CD4-positive, alpha-beta T cell (primary cell): ENCODE measurements at regions of chr21 and their contacts with region 1.

Region 1: GRCh38 chr21:35840197-35840799 is 220.0 kb downstream of the SETD4 start:
- DNase-seq: peak; percentile 9 to 77 (median 38)
- ATAC-seq: peak; percentile 51
- H3K4me3 ChIP-seq: no peak overlapping the region
- H3K4me3 Mint-ChIP-seq: no peak overlapping the region
- H3K27ac ChIP-seq: no peak overlapping the region
- H3K27ac Mint-ChIP-seq: no peak overlapping the region
- H3K4me1 ChIP-seq: no peaks in the 10 kb centered on the region
- H3K4me1 Mint-ChIP-seq: no peaks in the 10 kb centered on the region
- H3K27me3 ChIP-seq: no peaks in the 10 kb centered on the region
- H3K27me3 Mint-ChIP-seq: no peaks in the 10 kb centered on the region
- CTCF ChIP-seq: peak; percentile 78

Region 2: DNA sequence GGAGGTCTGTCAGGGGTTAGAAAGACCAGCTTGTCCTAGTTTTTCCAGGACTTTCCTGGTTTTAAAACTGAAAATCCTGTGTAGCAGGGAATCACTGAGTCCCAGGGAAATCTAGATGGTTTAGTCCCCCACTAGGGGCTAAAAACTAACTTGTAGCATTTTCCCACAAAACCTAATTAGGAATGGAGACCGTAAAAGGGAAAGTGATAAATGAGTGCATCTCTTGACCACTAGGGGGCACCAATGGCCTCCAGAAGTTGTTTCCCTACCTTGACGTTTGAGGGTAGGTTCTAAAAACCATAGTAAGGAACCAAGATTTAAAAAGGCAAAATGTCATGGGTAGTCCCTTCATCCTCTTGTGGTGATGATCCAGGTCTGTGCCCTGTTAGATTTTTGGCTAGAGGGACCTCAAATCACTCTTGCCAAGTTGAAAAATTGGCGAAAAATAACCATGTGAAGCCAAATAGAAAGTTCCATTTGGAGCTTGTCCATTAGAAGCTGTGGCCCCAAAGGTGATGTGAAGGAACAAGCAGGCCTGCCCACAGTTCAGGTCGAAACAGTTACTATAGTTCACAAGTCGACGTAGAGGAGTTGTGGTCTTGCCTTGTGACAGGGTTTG is 1147.0 kb before region 1 on chr21:
- CTCF ChIA-PET with region 1: interaction called, 20 read pairs
- POLR2A ChIA-PET with region 1: no interaction called
- intact Hi-C with region 1: loop called (anchors 1 kb)
- DNase-seq: peak in 12 of 14 experiments; percentile 8 to 79 (median 30)
- ATAC-seq: peak; percentile 32
- H3K4me3 ChIP-seq: no peak overlapping the region
- H3K4me3 Mint-ChIP-seq: no peak overlapping the region
- H3K27ac ChIP-seq: no peak overlapping the region
- H3K27ac Mint-ChIP-seq: no peak overlapping the region
- H3K4me1 ChIP-seq: no peaks in the 10 kb centered on the region
- H3K4me1 Mint-ChIP-seq: no peaks in the 10 kb centered on the region
- H3K27me3 ChIP-seq: peaks cover 4 to 13% of the 10 kb centered on the region in 2 experiments
- H3K27me3 Mint-ChIP-seq: peaks cover 16% of the 10 kb centered on the region
- CTCF ChIP-seq: peak; percentile 90

Region 3: GRCh38 chr21:34745557-34746255 is 1094.6 kb before region 1 on chr21:
- CTCF ChIA-PET with region 1: interaction called, 18 read pairs
- POLR2A ChIA-PET with region 1: interaction called, 9 read pairs
- intact Hi-C with region 1: loop called in 1 of 2 experiments (anchors 1 kb)
- DNase-seq: peak; percentile 12 to 77 (median 38)
- ATAC-seq: peak; percentile 73
- H3K4me3 ChIP-seq: no peak overlapping the region
- H3K4me3 Mint-ChIP-seq: peak overlapping the region; percentile 74
- H3K27ac ChIP-seq: no peak overlapping the region
- H3K27ac Mint-ChIP-seq: no peak overlapping the region
- H3K4me1 ChIP-seq: peaks cover 8% of the 10 kb centered on the region
- H3K4me1 Mint-ChIP-seq: peaks cover 5% of the 10 kb centered on the region
- H3K27me3 ChIP-seq: no peaks in the 10 kb centered on the region
- H3K27me3 Mint-ChIP-seq: no peaks in the 10 kb centered on the region
- CTCF ChIP-seq: peak; percentile 88

Region 4: GRCh38 chr21:35792569-35793305 is 47.6 kb before region 1 on chr21:
- CTCF ChIA-PET with region 1: no interaction called
- POLR2A ChIA-PET with region 1: no interaction called
- intact Hi-C with region 1: loop called in 1 of 2 experiments (anchors 5 kb)
- DNase-seq: no peak
- ATAC-seq: no peak
- H3K4me3 ChIP-seq: no peak overlapping the region
- H3K4me3 Mint-ChIP-seq: no peak overlapping the region
- H3K27ac ChIP-seq: no peak overlapping the region
- H3K27ac Mint-ChIP-seq: no peak overlapping the region
- H3K4me1 ChIP-seq: no peaks in the 10 kb centered on the region
- H3K4me1 Mint-ChIP-seq: no peaks in the 10 kb centered on the region
- H3K27me3 ChIP-seq: peaks cover 0 to 8% of the 10 kb centered on the region in 2 experiments
- H3K27me3 Mint-ChIP-seq: peaks cover 14% of the 10 kb centered on the region
- CTCF ChIP-seq: no peak

Region 5: DNA sequence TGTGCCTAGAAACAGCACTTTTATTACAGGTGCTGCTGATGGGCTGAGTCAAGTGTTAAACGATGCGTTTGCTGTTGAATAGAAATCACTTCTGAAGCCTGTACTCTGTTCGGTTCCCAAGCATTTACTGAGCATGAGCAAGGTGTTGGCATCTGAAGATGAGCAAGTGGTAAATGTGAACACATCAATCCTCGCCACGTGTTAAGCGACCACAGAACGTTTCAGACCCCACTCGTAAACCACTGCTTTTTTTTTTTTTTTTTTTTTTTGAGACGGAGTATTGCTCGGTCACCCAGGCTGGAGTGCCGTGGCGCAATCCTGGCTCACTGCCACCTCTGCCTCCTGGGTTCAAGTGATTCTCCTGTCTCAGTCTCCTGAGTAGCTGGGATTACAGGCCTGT is 21.2 kb before region 1 on chr21:
- CTCF ChIA-PET with region 1: no interaction called
- POLR2A ChIA-PET with region 1: no interaction called
- intact Hi-C with region 1: no loop called
- DNase-seq: no peak
- ATAC-seq: no peak
- H3K4me3 ChIP-seq: no peak overlapping the region
- H3K4me3 Mint-ChIP-seq: no peak overlapping the region
- H3K27ac ChIP-seq: no peak overlapping the region
- H3K27ac Mint-ChIP-seq: no peak overlapping the region
- H3K4me1 ChIP-seq: no peaks in the 10 kb centered on the region
- H3K4me1 Mint-ChIP-seq: no peaks in the 10 kb centered on the region
- H3K27me3 ChIP-seq: peaks cover 0 to 2% of the 10 kb centered on the region in 2 experiments
- H3K27me3 Mint-ChIP-seq: peaks cover 12% of the 10 kb centered on the region
- CTCF ChIP-seq: no peak

Region 6: DNA sequence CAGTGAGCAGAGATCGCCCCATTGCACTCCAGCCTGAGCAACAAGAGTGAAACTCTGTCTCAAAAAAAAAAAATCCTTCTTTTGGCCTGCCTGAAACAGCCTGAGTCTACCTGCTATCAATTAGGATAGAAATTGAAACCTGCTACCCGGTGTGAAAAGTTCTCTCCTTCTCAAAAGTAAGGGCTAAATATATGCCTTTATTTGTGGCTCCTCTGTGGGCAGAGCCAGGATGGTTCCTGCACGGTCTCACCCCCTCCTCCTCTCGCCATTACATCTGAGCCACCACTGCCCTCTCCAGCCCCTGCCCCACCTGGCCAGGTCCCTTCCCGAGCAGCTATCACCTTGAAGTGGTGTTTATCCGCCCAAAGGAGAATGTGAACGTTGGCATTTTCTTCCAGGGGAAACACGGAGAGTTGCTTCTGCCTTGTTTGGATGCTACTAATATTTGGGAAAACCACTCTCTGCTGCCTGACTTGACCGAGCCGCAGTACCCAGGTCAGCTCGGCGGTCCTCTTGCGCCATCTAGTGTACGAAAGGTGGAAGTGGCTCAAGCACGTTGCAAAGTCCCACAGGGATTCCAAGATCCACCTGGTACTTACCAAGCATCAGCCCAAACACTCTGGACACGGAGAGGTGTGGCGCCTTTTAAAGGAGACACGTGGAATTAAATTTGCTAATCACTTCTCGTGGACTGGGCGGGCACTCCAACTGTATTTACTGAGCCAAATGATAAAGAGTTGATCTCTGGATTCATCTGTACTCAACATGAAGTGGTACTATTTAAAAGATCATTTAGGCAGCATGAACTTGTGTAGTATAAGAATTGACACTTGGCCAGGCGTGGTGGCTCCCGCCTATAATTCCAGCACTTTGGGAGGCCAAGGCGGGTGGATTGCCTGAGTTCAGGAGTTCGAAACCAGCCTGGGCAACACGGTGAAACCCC is 188.1 kb after region 1 on chr21:
- CTCF ChIA-PET with region 1: interaction called, 5 read pairs
- POLR2A ChIA-PET with region 1: no interaction called
- intact Hi-C with region 1: loop called in 1 of 2 experiments (anchors 2 kb)
- DNase-seq: peak; percentile 25 to 85 (median 56)
- ATAC-seq: peak; percentile 80
- H3K4me3 ChIP-seq: no peak overlapping the region
- H3K4me3 Mint-ChIP-seq: no peak overlapping the region
- H3K27ac ChIP-seq: no peak overlapping the region
- H3K27ac Mint-ChIP-seq: no peak overlapping the region
- H3K4me1 ChIP-seq: peaks cover 5% of the 10 kb centered on the region
- H3K4me1 Mint-ChIP-seq: peaks cover 5% of the 10 kb centered on the region
- H3K27me3 ChIP-seq: no peaks in the 10 kb centered on the region
- H3K27me3 Mint-ChIP-seq: no peaks in the 10 kb centered on the region
- CTCF ChIP-seq: peak; percentile 95

Region 7: DNA sequence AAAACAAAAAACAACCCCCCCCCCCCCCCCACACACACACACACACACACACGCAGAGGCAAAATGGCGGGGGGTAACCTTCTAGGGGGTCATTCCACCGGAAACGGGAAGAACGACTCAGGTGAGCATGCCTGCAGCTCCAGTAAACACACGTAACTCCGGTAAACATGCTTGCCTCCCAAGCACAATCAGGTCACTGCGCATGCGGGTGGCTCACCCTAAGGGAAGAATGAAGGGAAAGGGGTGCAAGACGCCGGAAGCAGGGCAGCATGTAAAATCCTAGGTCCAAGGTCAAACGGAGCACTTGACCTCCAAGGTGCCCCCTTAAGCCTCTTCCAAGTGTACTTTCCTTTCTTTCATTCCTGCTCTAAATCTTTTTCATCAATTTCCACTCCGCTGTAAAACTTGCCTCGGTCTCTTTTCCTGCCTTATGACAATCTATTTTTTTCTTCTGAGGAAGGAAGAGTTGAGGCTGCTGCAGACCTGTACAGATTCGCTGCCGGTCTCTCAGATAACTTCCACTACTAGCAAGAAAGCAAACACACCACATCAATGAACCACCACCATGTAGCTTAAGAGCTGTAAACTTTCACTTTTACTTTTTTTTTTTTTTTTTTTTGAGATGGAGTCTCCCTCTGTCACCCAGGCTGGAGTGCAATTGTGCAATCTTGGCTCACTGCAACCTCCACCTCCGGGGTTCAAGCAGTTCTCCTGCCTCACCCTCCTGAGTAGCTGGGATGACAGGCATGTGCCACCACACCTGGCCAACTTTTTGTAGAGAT is 273.5 kb after region 1 on chr21:
- CTCF ChIA-PET with region 1: no interaction called
- POLR2A ChIA-PET with region 1: no interaction called
- intact Hi-C with region 1: loop called in 1 of 2 experiments (anchors 10 kb)
- DNase-seq: peak in 12 of 14 experiments; percentile 18 to 92 (median 48)
- ATAC-seq: peak; percentile 81
- H3K4me3 ChIP-seq: peak overlapping the region; percentile 56
- H3K4me3 Mint-ChIP-seq: peak overlapping the region; percentile 84
- H3K27ac ChIP-seq: peak overlapping the region; percentile 58 to 79
- H3K27ac Mint-ChIP-seq: peak overlapping the region; percentile 61
- H3K4me1 ChIP-seq: peaks cover 32% of the 10 kb centered on the region
- H3K4me1 Mint-ChIP-seq: peaks cover 27% of the 10 kb centered on the region
- H3K27me3 ChIP-seq: no peaks in the 10 kb centered on the region
- H3K27me3 Mint-ChIP-seq: no peaks in the 10 kb centered on the region
- CTCF ChIP-seq: no peak